Naive thymus-derived CD4-positive, alpha-beta T cell (primary cell): ENCODE measurements at regions of chr3 and their contacts with region 1.

Region 1: GRCh38 chr3:126703512-126704462 is at the start of gene CHCHD6:
- DNase-seq: peak; percentile 92 to 99 (median 96)
- ATAC-seq: peak; percentile 99
- H3K4me3 ChIP-seq: peak within 1 kb of the TSS; percentile 82
- H3K4me3 Mint-ChIP-seq: peak within 1 kb of the TSS; percentile 83 to 99 (median 97)
- H3K27ac ChIP-seq: peak within 1 kb of the TSS; percentile 69
- H3K27ac Mint-ChIP-seq: peak within 1 kb of the TSS; percentile 71 to 98 (median 92)
- H3K4me1 ChIP-seq: peaks cover 6 to 13% of the 10 kb centered on the region in 2 donors
- H3K4me1 Mint-ChIP-seq: peaks cover 17 to 28% (median 21%) of the 10 kb centered on the region in 7 donors
- H3K27me3 ChIP-seq: peaks cover 0 to 5% of the 10 kb centered on the region in 2 donors
- H3K27me3 Mint-ChIP-seq: peaks cover 10 to 42% (median 19%) of the 10 kb centered on the region in 5 donors
- total RNA-seq, gene CHCHD6: 5.4 to 14.0 (median 10.0) TPM

Region 2: GRCh38 chr3:126357295-126358037 is 346.3 kb before region 1 on chr3 and contains the start of gene KLF15:
- CTCF ChIA-PET with region 1: no interaction called
- POLR2A ChIA-PET with region 1: no interaction called
- intact Hi-C with region 1: loop called in 1 of 2 experiments (anchors 2 kb)
- DNase-seq: peak; percentile 50 to 84 (median 66)
- ATAC-seq: peak; percentile 95
- H3K4me3 ChIP-seq: peak within 1 kb of the TSS; percentile 67
- H3K4me3 Mint-ChIP-seq: peak within 1 kb of the TSS; percentile 89 to 95 (median 91)
- H3K27ac ChIP-seq: no peak within 1 kb of the TSS
- H3K27ac Mint-ChIP-seq: peak within 1 kb of the TSS in 5 of 9 donors; percentile 45 to 93 (median 72)
- H3K4me1 ChIP-seq: peaks cover 4 to 7% of the 10 kb centered on the region in 2 donors
- H3K4me1 Mint-ChIP-seq: peaks cover 4 to 17% (median 11%) of the 10 kb centered on the region in 7 donors
- H3K27me3 ChIP-seq: peaks cover 9 to 10% of the 10 kb centered on the region in 2 donors
- H3K27me3 Mint-ChIP-seq: peaks cover 45 to 52% (median 46%) of the 10 kb centered on the region in 5 donors
- total RNA-seq, gene KLF15: 0.57 to 0.81 TPM in 2 of 5 experiments, not detected in the others

Region 3: DNA sequence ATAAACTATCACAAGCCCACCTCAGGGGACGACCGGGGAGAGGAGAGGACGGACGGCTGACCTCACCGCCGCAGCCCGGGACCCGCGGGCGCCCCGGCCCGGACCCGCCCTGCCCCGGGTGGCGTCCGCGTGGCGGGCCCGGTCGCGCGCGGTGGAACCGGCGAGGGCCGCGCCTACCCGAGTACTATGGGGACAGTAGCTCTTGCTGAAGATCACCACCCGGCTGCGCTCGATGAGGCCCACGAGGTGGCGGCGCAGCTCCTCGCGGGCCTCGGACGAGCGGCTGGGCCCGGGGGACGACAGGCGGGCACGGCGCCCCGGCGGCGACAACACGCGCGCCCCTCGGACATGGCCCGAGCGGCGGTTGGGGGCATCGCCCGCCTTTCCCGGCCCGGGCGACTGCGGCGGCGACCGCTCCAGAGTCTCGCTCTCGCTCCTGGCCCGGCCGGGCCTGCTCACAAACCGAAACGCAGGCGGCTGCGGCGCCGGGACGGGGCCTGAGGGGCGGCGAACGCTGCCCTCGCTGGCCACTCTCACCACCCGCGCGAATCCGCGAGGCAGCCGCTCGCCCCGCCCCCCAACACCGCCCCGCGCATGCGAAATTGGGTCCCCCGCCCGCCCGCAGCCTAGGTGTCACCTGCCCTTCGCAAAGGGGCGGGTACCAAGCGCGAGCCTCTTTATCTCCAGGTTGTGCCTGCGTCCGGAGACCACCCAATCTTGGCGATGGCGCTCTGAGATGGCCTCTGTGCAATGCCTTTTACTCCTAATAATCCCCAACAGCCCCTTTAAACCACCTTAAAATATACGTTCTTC is 49.0 kb before region 1 on chr3 and contains the start of gene TXNRD3:
- CTCF ChIA-PET with region 1: no interaction called
- POLR2A ChIA-PET with region 1: no interaction called
- intact Hi-C with region 1: loop called in 1 of 2 experiments (anchors 1 kb)
- DNase-seq: peak; percentile 52 to 76 (median 71)
- ATAC-seq: peak; percentile 93
- H3K4me3 ChIP-seq: peak within 1 kb of the TSS; percentile 46
- H3K4me3 Mint-ChIP-seq: peak within 1 kb of the TSS; percentile 83 to 93 (median 89)
- H3K27ac ChIP-seq: peak within 1 kb of the TSS; percentile 51
- H3K27ac Mint-ChIP-seq: peak within 1 kb of the TSS in 7 of 9 donors; percentile 18 to 91 (median 51)
- H3K4me1 ChIP-seq: peaks cover 0 to 3% of the 10 kb centered on the region in 2 donors
- H3K4me1 Mint-ChIP-seq: peaks cover 4 to 19% (median 10%) of the 10 kb centered on the region in 7 donors
- H3K27me3 ChIP-seq: peaks cover 0 to 4% of the 10 kb centered on the region in 2 donors
- H3K27me3 Mint-ChIP-seq: peaks cover 0 to 51% (median 4%) of the 10 kb centered on the region in 5 donors
- total RNA-seq, gene TXNRD3: 0.46 to 4.8 (median 3.2) TPM

Region 4: DNA sequence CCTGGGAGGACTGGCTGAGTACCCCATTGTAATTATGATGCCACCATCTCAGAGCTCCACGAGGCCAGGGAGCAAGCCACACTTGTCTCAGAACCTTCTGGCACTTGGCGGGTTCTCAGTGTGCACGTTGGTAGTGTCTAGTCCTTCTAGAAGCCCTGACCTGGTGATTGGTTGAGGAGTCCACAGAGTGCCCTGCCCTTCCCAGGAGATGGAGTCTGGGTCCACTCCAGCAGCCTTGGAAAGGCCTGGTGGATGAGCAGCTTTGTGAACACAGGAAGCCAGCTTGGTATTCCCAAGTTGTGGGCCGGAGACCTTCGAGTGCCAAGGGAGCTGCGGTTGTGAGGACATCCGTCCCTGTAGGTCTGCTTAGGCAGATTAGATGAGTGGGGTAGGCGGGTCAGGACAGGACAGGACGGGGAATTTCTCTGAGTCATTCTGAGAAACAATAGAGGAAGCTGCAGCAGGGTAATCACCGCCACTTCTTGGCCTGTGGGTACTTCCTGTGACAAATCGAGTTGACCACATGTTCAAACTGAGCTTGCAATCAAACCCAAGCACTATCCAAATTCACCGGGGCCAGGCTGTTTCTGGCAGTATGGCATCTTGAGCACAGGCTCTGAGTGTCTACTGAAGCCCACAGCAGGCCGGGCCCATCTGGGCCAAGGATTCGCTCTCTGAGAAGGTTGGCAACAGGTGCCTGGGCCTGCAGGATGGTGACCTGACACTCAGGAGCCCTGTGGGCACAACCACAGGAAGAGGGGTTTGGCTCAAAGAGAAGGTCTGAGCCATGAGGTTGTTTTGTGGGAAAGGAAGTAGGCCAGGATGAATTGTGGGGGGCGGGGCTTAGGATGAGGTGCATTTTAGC is 207.6 kb after region 1 on chr3:
- CTCF ChIA-PET with region 1: no interaction called
- POLR2A ChIA-PET with region 1: no interaction called
- intact Hi-C with region 1: loop called in 1 of 2 experiments (anchors 1 kb)
- DNase-seq: peak in 4 of 9 donors; percentile 2 to 61 (median 12)
- ATAC-seq: peak; percentile 93
- H3K4me3 ChIP-seq: peak overlapping the region; percentile 16
- H3K4me3 Mint-ChIP-seq: peak overlapping the region in 6 of 10 donors; percentile 11 to 84 (median 28)
- H3K27ac ChIP-seq: no peak overlapping the region
- H3K27ac Mint-ChIP-seq: peak overlapping the region; percentile 42 to 94 (median 69)
- H3K4me1 ChIP-seq: peaks cover 15 to 22% of the 10 kb centered on the region in 2 donors
- H3K4me1 Mint-ChIP-seq: peaks cover 23 to 58% (median 36%) of the 10 kb centered on the region in 7 donors
- H3K27me3 ChIP-seq: no peaks in the 10 kb centered on the region
- H3K27me3 Mint-ChIP-seq: peaks cover 0 to 5% (median 0%) of the 10 kb centered on the region in 5 donors